ENCODE measurements at regions of chr2 and their contacts with region 1.

Region 1: DNA sequence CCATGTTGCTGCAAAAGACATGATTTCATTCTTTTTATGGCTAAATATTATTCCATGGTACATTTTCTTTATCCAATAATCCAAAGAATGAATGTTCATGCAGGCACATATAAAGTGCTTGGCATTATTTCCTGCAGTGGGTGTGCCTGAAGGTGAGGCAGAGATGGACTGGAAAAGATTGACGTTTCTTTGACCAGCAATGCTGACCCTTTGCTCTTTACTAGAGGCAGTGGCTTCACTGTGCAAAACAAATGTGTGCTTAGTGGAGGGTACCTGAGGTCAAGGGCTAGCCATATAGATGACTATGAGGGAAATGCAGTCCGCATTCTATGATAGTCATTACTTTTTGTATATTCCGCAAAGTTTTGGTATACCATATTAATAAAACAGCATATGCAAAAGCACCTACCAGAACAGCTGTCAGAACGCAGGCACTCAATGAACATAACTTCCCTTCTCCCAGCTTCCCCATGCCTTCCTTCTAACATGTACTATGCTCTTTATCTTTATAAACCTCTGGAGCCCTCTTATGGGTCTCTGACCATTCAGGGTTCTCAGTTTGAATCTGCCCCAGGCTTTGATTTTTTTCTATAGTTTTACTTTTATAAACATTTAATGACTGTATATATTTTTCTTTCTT is 32.6 kb upstream of the CPS1 start:
- DNase-seq: peak; percentile 82
- ATAC-seq: peak; percentile 100
- H3K4me3 ChIP-seq: peak overlapping the region in 1 of 3 experiments; percentile 6; a peak in 1 of 6 replicates
- H3K27ac ChIP-seq: peak overlapping the region; percentile 62
- H3K4me1 ChIP-seq: peaks cover 35% of the 10 kb centered on the region
- H3K27me3 ChIP-seq: no peaks in the 10 kb centered on the region
- CTCF ChIP-seq: no peak
- EP300 ChIP-seq: peak in 1 of 2 experiments; percentile 82; a peak in 2 of 4 replicates
- POLR2A ChIP-seq: no peak
- RAD21 ChIP-seq: no peak

Region 2: DNA sequence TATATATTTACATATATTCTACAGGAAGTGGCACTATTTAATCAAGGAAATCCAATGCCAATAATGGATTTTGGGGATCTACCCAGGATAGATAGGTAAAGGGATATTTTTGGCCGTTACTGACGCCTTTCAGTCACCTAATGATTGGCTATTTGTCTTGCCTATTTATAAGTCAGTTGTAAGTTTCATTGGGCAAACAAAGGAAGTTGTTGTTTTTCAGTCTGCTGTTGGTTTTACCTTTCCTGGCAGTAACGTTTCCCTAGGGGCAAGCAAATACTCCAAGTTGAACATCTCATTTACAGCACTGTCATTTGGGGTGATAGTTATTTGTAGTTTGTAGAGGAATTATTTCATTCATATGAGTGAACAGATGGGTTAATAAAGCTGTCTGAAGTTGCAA is 30.2 kb before region 1 on chr2:
- CTCF ChIA-PET with region 1: no interaction called
- POLR2A ChIA-PET with region 1: no interaction called
- in situ Hi-C with region 1: no loop called
- intact Hi-C with region 1: loop called (anchors 1 kb)
- DNase-seq: no peak
- ATAC-seq: no peak
- H3K4me3 ChIP-seq: no peak overlapping the region
- H3K27ac ChIP-seq: no peak overlapping the region
- H3K4me1 ChIP-seq: no peaks in the 10 kb centered on the region
- H3K27me3 ChIP-seq: no peaks in the 10 kb centered on the region
- CTCF ChIP-seq: no peak
- EP300 ChIP-seq: no peak
- POLR2A ChIP-seq: no peak
- RAD21 ChIP-seq: no peak

Region 3: DNA sequence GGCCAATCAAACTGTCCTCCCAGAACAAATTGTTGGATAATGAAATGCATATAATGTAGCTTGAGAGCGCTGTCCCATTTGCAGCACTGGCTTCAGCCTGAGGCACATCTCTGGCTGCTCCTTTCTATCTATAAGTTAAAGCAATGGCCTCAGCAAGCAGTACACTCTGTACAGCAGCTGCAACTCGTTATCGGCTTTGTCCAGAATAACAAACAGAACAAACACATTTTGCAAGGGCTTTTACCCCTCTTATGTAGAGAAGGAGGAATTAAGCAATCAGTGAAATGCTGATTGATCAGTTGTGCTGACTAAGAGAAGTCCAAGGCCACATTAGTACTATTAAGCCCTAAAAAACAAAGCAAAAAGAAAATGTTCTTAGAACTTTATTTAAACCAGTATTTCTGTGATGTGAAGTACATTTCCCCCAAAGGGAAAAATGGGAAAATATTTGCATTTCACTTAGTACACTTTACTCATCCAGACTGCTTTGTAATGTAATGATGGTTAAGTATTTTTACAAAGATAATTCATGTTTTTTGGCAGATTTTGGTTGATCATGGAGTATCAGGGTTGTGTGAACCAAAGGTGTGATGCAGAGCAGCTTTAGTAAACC is 17.6 kb after region 1 on chr2:
- CTCF ChIA-PET with region 1: no interaction called
- POLR2A ChIA-PET with region 1: interaction called, 7 read pairs
- in situ Hi-C with region 1: no loop called
- intact Hi-C with region 1: loop called (anchors 1 kb)
- DNase-seq: peak; percentile 95
- ATAC-seq: peak; percentile 97
- H3K4me3 ChIP-seq: peak overlapping the region in 2 of 3 experiments; percentile 32; a peak in 2 of 6 replicates
- H3K27ac ChIP-seq: peak overlapping the region; percentile 80
- H3K4me1 ChIP-seq: peaks cover 63% of the 10 kb centered on the region
- H3K27me3 ChIP-seq: no peaks in the 10 kb centered on the region
- CTCF ChIP-seq: 0 out of 2 replicates have a peak, but pooled peaks have one; percentile 9
- EP300 ChIP-seq: peak; percentile 60 to 98; a peak in 3 of 4 replicates
- POLR2A ChIP-seq: peak in 1 of 2 experiments; percentile 40; a peak in 1 of 4 replicates
- RAD21 ChIP-seq: no peak

Region 4: DNA sequence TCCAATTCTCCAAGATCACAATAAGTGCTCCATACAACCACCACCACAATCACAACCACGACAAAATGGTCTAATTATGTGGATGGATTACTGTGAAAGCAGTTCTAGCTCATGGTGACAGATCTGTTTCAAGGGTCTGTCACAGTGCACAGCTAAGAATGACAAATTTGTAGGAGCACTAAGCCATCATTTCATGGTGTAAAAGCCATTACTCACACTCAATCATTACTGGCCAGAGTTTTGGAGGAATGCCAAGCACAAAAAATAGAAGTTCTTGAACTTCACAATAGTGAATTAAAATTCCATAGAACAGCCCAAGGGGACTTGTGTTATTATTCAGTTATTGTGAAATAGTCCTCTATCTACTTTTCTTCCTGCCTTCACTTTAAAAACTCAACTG is 34.9 kb after region 1 on chr2:
- CTCF ChIA-PET with region 1: no interaction called
- POLR2A ChIA-PET with region 1: no interaction called
- in situ Hi-C with region 1: no loop called
- intact Hi-C with region 1: no loop called
- DNase-seq: no peak
- ATAC-seq: no peak
- H3K4me3 ChIP-seq: no peak overlapping the region
- H3K27ac ChIP-seq: no peak overlapping the region
- H3K4me1 ChIP-seq: peaks cover 8% of the 10 kb centered on the region
- H3K27me3 ChIP-seq: no peaks in the 10 kb centered on the region
- CTCF ChIP-seq: no peak
- EP300 ChIP-seq: no peak
- POLR2A ChIP-seq: no peak
- RAD21 ChIP-seq: no peak

Region 5: DNA sequence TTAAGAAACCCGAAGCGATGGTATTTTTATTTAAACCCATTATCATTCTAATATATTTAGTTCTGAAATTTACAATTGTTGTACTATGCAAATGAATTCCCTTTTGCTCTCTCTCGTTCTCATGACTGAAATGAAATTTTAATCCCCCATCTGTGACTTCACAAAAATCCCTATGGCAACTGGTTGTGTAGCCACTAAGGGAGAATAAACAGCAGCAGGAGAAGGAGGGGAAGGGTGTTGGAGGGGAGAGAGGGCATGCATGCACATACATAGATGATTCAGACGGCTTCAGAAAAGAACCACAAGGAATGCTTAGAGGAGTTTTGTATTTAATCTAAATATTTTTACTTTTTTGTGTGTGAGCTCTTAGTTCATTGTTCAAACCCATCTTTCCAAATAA is 69.4 kb after region 1 on chr2:
- CTCF ChIA-PET with region 1: no interaction called
- POLR2A ChIA-PET with region 1: no interaction called
- in situ Hi-C with region 1: no loop called
- intact Hi-C with region 1: no loop called
- DNase-seq: no peak
- ATAC-seq: no peak
- H3K4me3 ChIP-seq: no peak overlapping the region
- H3K27ac ChIP-seq: no peak overlapping the region
- H3K4me1 ChIP-seq: no peaks in the 10 kb centered on the region
- H3K27me3 ChIP-seq: no peaks in the 10 kb centered on the region
- CTCF ChIP-seq: no peak
- EP300 ChIP-seq: no peak
- POLR2A ChIP-seq: no peak
- RAD21 ChIP-seq: no peak